GM12878 (cell line): ENCODE measurements at regions of chr10 and their contacts with region 1.

Region 1: GRCh38 chr10:100338434-100339036 is 8.5 kb upstream of the SCD start:
- DNase-seq: no peak
- ATAC-seq: peak; percentile 88
- H3K4me3 ChIP-seq: no peak overlapping the region
- H3K27ac ChIP-seq: no peak overlapping the region
- H3K4me1 ChIP-seq: peaks cover 14% of the 10 kb centered on the region
- H3K27me3 ChIP-seq: no peaks in the 10 kb centered on the region; a peak in 1 of 4 replicates
- CTCF ChIP-seq: peak; percentile 91 to 93 (median 92)
- EP300 ChIP-seq: no peak
- POLR2A ChIP-seq: no peak
- RAD21 ChIP-seq: peak; percentile 93

Region 2: GRCh38 chr10:99854860-99855259 is 483.7 kb before region 1 on chr10:
- CTCF ChIA-PET with region 1: no interaction called
- POLR2A ChIA-PET with region 1: interaction called, 3 read pairs
- RAD21 ChIA-PET with region 1: no interaction called
- SMC1A ChIA-PET with region 1: no interaction called
- in situ Hi-C with region 1: no loop called
- intact Hi-C with region 1: loop called (anchors 10 kb)
- DNase-seq: no peak
- ATAC-seq: no peak
- H3K4me3 ChIP-seq: no peak overlapping the region
- H3K27ac ChIP-seq: no peak overlapping the region
- H3K4me1 ChIP-seq: no peaks in the 10 kb centered on the region
- H3K27me3 ChIP-seq: no peaks in the 10 kb centered on the region
- CTCF ChIP-seq: peak in 1 of 3 experiments; percentile 26; a peak in 1 of 6 replicates
- EP300 ChIP-seq: no peak
- POLR2A ChIP-seq: no peak
- RAD21 ChIP-seq: peak; percentile 31; the same call in 1 of the 2 replicates

Region 3: DNA sequence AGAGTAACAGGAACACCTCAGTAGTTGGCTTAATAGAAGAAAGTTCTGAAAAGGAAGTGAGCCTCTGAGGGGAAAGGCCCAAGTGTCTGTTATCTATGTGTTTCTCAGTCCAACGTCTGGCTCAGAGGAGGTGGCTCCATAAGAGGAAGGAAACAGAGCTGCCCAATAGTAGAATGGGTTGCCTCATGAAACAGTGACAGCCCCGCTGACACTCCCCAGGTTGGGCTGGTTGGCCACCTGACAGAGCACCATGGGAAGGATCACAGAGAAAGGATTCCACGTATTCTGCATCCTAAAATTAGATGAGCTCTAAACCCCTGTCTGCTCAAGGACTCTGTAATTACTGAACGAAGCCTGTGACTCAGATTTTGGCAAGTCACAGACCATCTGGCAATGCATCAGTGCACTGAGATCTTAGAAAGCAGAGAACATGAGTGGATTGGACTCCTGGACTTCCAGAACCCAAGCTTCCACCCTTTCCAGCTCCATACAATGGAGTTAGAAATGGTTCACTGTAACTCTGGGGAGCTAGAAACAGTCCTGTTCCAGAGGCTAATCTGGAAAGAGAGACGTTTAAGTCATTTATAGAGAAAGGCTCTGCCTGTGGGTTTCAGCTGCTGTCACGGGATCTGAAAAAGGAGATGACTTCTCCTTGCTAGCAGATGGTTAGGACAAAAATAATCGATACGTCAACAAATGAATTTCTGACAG is 11.4 kb before region 1 on chr10:
- CTCF ChIA-PET with region 1: interaction called, 84 read pairs
- POLR2A ChIA-PET with region 1: interaction called, 7 read pairs
- RAD21 ChIA-PET with region 1: interaction called, 32 read pairs
- SMC1A ChIA-PET with region 1: interaction called, 18 read pairs
- in situ Hi-C with region 1: no loop called
- intact Hi-C with region 1: no loop called
- DNase-seq: peak; percentile 90
- ATAC-seq: peak; percentile 100
- H3K4me3 ChIP-seq: no peak overlapping the region; the same call in 1 of the 2 replicates
- H3K27ac ChIP-seq: peak overlapping the region; percentile 70
- H3K4me1 ChIP-seq: peaks cover 15% of the 10 kb centered on the region
- H3K27me3 ChIP-seq: no peaks in the 10 kb centered on the region; a peak in 1 of 4 replicates
- CTCF ChIP-seq: no peak
- EP300 ChIP-seq: peak in 1 of 2 experiments; percentile 57; a peak in 1 of 4 replicates
- POLR2A ChIP-seq: peak; percentile 19; the same call in 1 of the 2 replicates
- RAD21 ChIP-seq: no peak

Region 4: GRCh38 chr10:100433253-100434240 is 95.0 kb after region 1 on chr10:
- CTCF ChIA-PET with region 1: interaction called, 312 read pairs
- POLR2A ChIA-PET with region 1: interaction called, 3 read pairs
- RAD21 ChIA-PET with region 1: interaction called, 214 read pairs
- SMC1A ChIA-PET with region 1: interaction called, 277 read pairs
- in situ Hi-C with region 1: loop called (anchors 5 kb)
- intact Hi-C with region 1: loop called (anchors 1 kb)
- DNase-seq: peak; percentile 81
- ATAC-seq: peak; percentile 96
- H3K4me3 ChIP-seq: no peak overlapping the region
- H3K27ac ChIP-seq: no peak overlapping the region
- H3K4me1 ChIP-seq: no peaks in the 10 kb centered on the region
- H3K27me3 ChIP-seq: no peaks in the 10 kb centered on the region
- CTCF ChIP-seq: peak; percentile 96 to 100 (median 100); a peak in 5 of 6 replicates
- EP300 ChIP-seq: no peak
- POLR2A ChIP-seq: no peak
- RAD21 ChIP-seq: peak; percentile 98

Region 5: GRCh38 chr10:100508691-100509150 is 170.2 kb after region 1 on chr10:
- CTCF ChIA-PET with region 1: interaction called, 9 read pairs
- POLR2A ChIA-PET with region 1: no interaction called
- RAD21 ChIA-PET with region 1: interaction called, 4 read pairs
- SMC1A ChIA-PET with region 1: interaction called, 12 read pairs
- in situ Hi-C with region 1: loop called (anchors 5 kb)
- intact Hi-C with region 1: loop called (anchors 2 kb)
- DNase-seq: no peak
- ATAC-seq: peak; percentile 94
- H3K4me3 ChIP-seq: no peak overlapping the region
- H3K27ac ChIP-seq: no peak overlapping the region
- H3K4me1 ChIP-seq: peaks cover 8% of the 10 kb centered on the region; the same call in 1 of the 2 replicates
- H3K27me3 ChIP-seq: no peaks in the 10 kb centered on the region
- CTCF ChIP-seq: peak; percentile 34 to 64 (median 51)
- EP300 ChIP-seq: no peak
- POLR2A ChIP-seq: no peak
- RAD21 ChIP-seq: peak; percentile 62